Activated B cell treated with CpG ODN at 0.5 μM for 24 hours (primary cell): ENCODE measurements at regions of chr4 and their contacts with region 1.

Region 1: GRCh38 chr4:2728876-2729875 is 27.0 kb downstream of the TNIP2 start:
- DNase-seq: no peak
- ATAC-seq: no peak
- H3K4me3 Mint-ChIP-seq: no peak overlapping the region
- H3K27ac Mint-ChIP-seq: no peak overlapping the region
- H3K4me1 Mint-ChIP-seq: peaks cover 5% of the 10 kb centered on the region
- H3K27me3 Mint-ChIP-seq: no peaks in the 10 kb centered on the region
- CTCF ChIP-seq: no peak

Region 2: DNA sequence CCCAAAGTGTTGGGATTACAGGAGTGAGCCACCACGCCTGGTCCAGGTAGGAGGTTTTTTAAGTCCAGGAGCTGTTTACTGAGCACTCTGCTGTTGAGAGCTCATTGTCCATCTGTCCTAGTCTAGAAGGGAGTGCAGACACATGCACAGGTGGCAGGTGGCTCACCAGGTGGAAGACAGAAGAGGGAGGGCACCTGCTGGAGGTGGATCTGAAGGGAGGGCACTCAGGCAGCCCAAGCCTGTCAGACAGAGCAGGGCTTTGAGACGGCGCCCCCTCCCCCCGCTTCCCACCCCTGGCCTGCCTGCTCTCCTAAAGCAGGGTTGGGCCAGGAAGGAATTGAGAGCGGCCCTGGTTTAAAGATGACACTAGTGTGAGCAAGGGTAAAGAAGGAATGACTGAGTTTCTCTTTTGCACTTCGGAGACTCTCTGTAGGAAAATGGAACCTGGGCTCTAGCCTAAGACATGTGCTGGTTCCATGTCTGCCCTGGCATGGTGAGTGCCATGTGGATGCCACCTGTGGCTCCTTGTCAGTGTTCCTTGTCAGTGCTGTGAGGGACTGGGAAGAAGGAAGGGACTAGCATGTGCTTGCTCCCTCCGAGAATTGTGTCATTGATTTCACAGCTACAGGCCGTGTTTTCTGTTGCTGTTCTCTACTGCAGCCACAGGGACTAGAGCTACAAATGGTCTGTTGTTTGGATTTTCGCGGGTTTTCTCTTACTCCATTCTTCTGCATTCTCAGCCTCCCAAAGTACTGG is 81.6 kb before region 1 on chr4:
- CTCF ChIA-PET with region 1: no interaction called
- POLR2A ChIA-PET with region 1: interaction called, 10 read pairs
- intact Hi-C with region 1: no loop called
- DNase-seq: no peak
- ATAC-seq: no peak
- H3K4me3 Mint-ChIP-seq: no peak overlapping the region
- H3K27ac Mint-ChIP-seq: no peak overlapping the region
- H3K4me1 Mint-ChIP-seq: peaks cover 15% of the 10 kb centered on the region
- H3K27me3 Mint-ChIP-seq: no peaks in the 10 kb centered on the region
- CTCF ChIP-seq: no peak

Region 3: DNA sequence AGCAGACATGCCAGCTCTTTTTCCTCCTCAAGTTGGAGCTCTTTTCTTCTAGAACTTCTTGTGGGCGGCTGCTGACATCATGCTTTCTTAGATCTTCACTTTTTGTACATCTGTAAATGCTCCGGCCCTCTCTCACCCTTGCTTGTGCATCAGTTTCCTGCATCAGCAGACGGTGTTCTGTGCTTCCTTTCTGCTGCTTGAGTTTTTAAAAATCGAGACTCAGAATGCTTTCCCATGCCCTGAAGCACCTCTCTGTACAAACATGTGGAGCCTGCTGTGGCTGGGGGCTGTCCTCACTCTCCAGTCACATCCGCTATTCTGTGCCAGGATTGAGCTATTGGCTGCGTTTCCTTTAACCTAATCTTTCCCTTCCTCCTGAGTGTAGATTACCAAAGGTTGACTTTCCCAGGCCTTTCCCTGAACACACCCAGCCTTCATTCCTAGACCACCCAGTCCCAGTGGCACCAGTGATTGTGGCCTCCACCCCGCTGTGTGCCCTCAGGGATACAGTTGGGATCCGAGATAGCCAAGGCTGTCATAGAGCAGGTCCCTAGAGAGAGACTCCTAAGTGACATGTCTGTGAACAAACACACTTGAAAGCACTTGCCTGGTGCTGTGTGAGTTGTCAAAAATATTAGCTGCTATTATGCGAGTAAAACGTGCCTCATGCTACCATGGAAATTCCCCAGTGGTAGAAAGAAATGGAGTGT is 15.0 kb before region 1 on chr4:
- CTCF ChIA-PET with region 1: interaction called, 3 read pairs
- POLR2A ChIA-PET with region 1: interaction called, 10 read pairs
- intact Hi-C with region 1: no loop called
- DNase-seq: no peak
- ATAC-seq: no peak
- H3K4me3 Mint-ChIP-seq: no peak overlapping the region
- H3K27ac Mint-ChIP-seq: no peak overlapping the region
- H3K4me1 Mint-ChIP-seq: peaks cover 23% of the 10 kb centered on the region
- H3K27me3 Mint-ChIP-seq: no peaks in the 10 kb centered on the region
- CTCF ChIP-seq: no peak

Region 4: DNA sequence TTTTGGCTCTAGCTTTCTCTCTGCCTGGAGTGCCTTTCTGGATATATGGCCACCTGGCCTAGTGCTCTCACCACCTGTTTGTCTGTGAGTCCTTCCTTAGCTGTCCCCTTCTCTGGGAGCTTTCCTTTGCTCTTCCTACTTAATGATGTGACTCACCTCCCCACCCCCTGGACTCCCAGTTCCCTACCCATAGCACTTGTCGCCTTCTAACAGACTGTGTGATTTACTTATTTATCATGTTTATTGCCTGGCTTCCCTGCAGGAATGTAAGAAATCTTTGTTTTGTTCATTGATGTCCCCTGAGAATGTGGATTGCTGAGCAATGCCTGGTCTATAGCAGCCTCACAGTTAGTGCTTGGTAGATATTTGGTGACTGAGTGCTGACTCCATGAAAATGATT is 133.4 kb after region 1 on chr4:
- CTCF ChIA-PET with region 1: no interaction called
- POLR2A ChIA-PET with region 1: interaction called, 10 read pairs
- intact Hi-C with region 1: no loop called
- DNase-seq: no peak
- ATAC-seq: no peak
- H3K4me3 Mint-ChIP-seq: peak overlapping the region; percentile 46
- H3K27ac Mint-ChIP-seq: peak overlapping the region; percentile 77
- H3K4me1 Mint-ChIP-seq: peaks cover 92% of the 10 kb centered on the region
- H3K27me3 Mint-ChIP-seq: no peaks in the 10 kb centered on the region
- CTCF ChIP-seq: no peak